Brain microvascular endothelial cell (primary cell): ENCODE measurements at regions of chr13 and their contacts with region 1.

Region 1: DNA sequence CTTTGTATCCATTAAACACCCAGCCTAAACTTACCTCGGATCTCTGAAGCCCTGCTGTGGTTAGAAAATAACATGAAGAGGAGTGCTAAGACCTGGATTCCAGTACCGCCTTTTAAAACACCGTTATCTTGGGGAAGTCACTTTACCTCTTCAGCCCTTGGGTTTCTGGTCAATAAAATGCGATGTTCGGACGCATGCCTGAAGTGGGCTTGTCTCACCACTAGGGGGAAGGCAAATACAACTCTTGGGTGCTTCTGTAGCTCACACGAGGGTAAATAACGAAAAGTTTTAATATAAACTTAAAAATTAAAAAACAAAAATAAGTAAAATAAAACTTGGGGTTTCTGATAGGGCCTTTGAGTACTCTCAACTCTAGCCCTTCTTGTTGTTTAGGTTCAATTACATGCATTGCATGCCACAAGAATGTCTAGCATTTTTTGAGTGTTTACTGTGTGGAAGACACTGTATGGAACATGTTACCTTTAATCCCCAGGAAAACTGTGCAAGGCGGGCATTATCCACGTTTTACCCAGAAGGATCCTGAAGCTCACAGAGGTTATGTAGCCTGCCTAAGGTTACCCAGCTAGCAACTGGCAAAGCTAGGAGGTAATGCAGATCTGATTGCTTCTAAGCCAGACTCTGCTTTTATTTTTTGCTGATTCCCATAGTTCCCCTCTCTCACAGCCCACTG is 240.4 kb downstream of the LMO7 start:
- DNase-seq: peak; percentile 54
- H3K4me3 ChIP-seq: no peak overlapping the region
- H3K27ac ChIP-seq: no peak overlapping the region
- H3K27me3 ChIP-seq: no peaks in the 10 kb centered on the region
- CTCF ChIP-seq: peak; percentile 90

Region 2: DNA sequence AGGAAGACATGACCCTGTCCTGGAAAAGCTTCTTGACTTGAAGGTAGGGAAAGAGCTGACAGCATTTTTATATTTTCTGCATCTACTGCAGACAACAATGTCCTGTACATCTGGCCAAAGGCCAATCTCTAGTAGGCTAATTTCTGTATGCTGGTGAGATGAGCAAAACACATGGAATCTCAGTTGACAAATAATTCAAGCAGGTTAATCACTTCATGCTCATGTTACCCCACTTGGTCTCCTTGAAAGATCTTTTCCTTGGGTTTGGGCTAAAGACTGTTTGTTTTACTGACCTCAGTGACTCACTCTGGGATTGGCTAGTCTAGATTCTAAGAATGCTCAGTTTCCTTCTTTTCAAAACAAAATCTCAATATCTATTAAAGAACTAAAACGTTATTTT is 58.4 kb after region 1 on chr13:
- in situ Hi-C with region 1: no loop called
- DNase-seq: peak; percentile 25
- H3K4me3 ChIP-seq: no peak overlapping the region
- H3K27ac ChIP-seq: no peak overlapping the region
- H3K27me3 ChIP-seq: no peaks in the 10 kb centered on the region
- CTCF ChIP-seq: no peak

Region 3: GRCh38 chr13:76175961-76176725 is 299.6 kb after region 1 on chr13:
- in situ Hi-C with region 1: no loop called
- DNase-seq: no peak
- H3K4me3 ChIP-seq: no peak overlapping the region
- H3K27ac ChIP-seq: no peak overlapping the region
- H3K27me3 ChIP-seq: no peaks in the 10 kb centered on the region
- CTCF ChIP-seq: no peak

Region 4: GRCh38 chr13:76473552-76474134 is 597.1 kb after region 1 on chr13:
- in situ Hi-C with region 1: loop called (anchors 25 kb)
- DNase-seq: peak; percentile 81
- H3K4me3 ChIP-seq: no peak overlapping the region
- H3K27ac ChIP-seq: no peak overlapping the region
- H3K27me3 ChIP-seq: no peaks in the 10 kb centered on the region
- CTCF ChIP-seq: peak; percentile 81